Activated CD4-positive, alpha-beta memory T cell treated with anti-CD3 and anti-CD28 coated beads for 36 hours (primary cell): ENCODE measurements at regions of chr1 and their contacts with region 1.

Region 1: DNA sequence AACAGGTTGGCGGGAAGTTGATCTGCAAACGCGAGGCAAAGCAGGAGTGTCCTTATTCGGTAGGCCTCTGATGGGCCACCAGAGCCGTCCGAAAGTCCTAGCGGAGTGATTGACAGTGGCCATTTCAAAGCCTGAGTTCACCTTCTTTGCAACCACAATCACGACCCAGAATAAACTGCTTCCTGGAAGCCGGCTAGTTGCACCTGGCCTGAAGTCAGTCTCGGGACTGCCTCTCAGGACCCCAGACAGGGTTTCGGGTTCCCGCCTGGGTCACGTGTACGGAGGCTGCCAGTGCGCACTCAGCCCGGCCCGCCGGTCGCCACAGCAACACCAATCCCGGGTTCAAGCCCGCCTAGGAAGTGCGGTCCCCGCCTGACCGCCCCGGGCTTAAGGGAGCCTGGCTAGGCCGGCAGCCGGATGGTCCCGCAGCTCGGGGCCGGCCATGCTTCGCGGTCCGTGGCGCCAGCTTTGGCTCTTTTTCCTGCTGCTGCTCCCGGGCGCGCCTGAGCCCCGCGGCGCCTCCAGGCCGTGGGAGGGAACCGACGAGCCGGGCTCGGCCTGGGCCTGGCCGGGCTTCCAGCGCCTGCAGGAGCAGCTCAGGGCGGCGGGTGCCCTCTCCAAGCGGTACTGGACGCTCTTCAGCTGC is at the start of gene TOR3A:
- DNase-seq: peak; percentile 89
- H3K4me3 Mint-ChIP-seq: peak within 1 kb of the TSS; percentile 89
- H3K27ac Mint-ChIP-seq: peak within 1 kb of the TSS; percentile 91
- H3K4me1 Mint-ChIP-seq: peaks cover 23% of the 10 kb centered on the region
- H3K27me3 Mint-ChIP-seq: no peaks in the 10 kb centered on the region
- total RNA-seq, gene TOR3A: 35.7 to 36.7 TPM

Region 2: DNA sequence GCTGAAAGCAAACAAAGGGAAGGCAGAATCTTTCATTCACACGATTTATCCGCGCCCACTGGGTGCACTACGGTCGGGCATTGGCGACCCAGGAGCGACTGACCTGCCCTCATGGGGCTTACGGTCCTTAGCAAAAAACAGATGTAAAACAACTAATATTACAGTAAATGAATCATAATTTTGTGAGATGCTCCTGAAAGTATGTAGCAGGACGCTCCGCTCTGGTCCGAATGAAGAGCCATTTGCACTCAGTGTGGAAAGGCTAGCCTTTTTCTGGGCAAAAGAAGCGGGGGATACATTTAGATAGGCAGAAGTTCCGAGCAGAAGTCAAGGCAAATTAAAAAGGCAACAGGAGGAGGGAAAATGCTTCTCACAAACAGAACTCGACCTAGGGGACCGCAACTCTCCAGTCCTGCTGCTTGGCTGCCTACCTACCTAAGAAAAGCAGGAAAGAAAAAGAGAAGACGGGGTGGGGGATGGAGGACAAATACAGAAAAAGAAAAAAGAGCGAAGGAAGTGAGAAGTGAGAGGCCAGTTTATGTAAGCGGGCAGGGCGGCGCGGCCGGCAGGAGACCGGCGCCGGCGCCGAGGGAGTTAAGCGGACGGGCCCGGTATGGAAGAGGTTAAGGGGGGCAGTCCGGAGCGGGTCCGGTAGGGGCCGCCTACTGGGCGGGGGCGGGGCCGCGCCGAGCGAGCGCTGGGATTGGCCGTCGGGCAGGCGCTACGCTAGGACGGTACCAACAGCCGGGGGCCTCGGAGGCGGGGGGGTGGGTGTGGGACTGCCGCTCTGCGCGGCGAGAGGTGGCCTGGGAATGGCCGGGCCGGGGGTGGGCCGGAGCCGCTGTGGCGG is 56.5 kb before region 1 on chr1 and contains the start of gene FAM20B:
- CTCF ChIA-PET with region 1: no interaction called
- POLR2A ChIA-PET with region 1: interaction called, 3 read pairs
- intact Hi-C with region 1: loop called (anchors 1 kb)
- DNase-seq: peak; percentile 94
- H3K4me3 Mint-ChIP-seq: peak within 1 kb of the TSS; percentile 87
- H3K27ac Mint-ChIP-seq: peak within 1 kb of the TSS; percentile 85
- H3K4me1 Mint-ChIP-seq: peaks cover 37% of the 10 kb centered on the region
- H3K27me3 Mint-ChIP-seq: no peaks in the 10 kb centered on the region
- total RNA-seq, gene FAM20B: 38.1 to 39.2 TPM

Region 3: GRCh38 chr1:179129702-179130473 is 48.1 kb after region 1 on chr1:
- CTCF ChIA-PET with region 1: interaction called, 3 read pairs
- POLR2A ChIA-PET with region 1: no interaction called
- intact Hi-C with region 1: loop called (anchors 1 kb)
- DNase-seq: peak; percentile 27
- H3K4me3 Mint-ChIP-seq: peak overlapping the region; percentile 59
- H3K27ac Mint-ChIP-seq: peak overlapping the region; percentile 82
- H3K4me1 Mint-ChIP-seq: peaks cover 24% of the 10 kb centered on the region
- H3K27me3 Mint-ChIP-seq: no peaks in the 10 kb centered on the region

Region 4: GRCh38 chr1:179229214-179230140 is 147.7 kb after region 1 on chr1 and contains the start of gene ABL2:
- CTCF ChIA-PET with region 1: no interaction called
- POLR2A ChIA-PET with region 1: no interaction called
- intact Hi-C with region 1: loop called (anchors 1 kb)
- DNase-seq: peak; percentile 60
- H3K4me3 Mint-ChIP-seq: peak within 1 kb of the TSS; percentile 90
- H3K27ac Mint-ChIP-seq: peak within 1 kb of the TSS; percentile 80
- H3K4me1 Mint-ChIP-seq: peaks cover 34% of the 10 kb centered on the region
- H3K27me3 Mint-ChIP-seq: no peaks in the 10 kb centered on the region
- total RNA-seq, gene ABL2: 8.8 to 9.1 TPM

Region 5: DNA sequence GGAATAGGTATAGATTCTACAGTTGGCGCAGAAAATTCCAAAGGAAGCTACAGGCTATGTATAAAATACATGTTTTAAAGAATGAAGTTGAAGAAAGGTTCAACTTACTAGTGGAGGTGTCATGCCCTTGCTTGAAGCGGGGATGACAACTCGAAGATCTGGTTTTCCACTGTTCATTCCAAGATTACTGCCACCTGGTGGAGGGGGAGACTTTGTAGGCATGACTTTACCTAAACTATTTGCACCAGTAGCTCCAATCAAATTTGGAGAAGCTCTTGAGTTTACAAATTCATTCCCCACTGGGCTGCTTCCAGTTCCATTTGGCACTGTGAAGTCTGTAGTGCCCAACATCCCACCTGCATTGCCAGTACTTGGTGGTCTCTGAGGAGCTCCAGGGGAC is 365.7 kb after region 1 on chr1:
- CTCF ChIA-PET with region 1: no interaction called
- POLR2A ChIA-PET with region 1: no interaction called
- intact Hi-C with region 1: loop called (anchors 2 kb)
- DNase-seq: no peak
- H3K4me3 Mint-ChIP-seq: no peak overlapping the region
- H3K27ac Mint-ChIP-seq: no peak overlapping the region
- H3K4me1 Mint-ChIP-seq: no peaks in the 10 kb centered on the region
- H3K27me3 Mint-ChIP-seq: peaks cover 10% of the 10 kb centered on the region